Endothelial cell of umbilical vein (primary cell): ENCODE measurements at regions of chr3 and their contacts with region 1.

Region 1: DNA sequence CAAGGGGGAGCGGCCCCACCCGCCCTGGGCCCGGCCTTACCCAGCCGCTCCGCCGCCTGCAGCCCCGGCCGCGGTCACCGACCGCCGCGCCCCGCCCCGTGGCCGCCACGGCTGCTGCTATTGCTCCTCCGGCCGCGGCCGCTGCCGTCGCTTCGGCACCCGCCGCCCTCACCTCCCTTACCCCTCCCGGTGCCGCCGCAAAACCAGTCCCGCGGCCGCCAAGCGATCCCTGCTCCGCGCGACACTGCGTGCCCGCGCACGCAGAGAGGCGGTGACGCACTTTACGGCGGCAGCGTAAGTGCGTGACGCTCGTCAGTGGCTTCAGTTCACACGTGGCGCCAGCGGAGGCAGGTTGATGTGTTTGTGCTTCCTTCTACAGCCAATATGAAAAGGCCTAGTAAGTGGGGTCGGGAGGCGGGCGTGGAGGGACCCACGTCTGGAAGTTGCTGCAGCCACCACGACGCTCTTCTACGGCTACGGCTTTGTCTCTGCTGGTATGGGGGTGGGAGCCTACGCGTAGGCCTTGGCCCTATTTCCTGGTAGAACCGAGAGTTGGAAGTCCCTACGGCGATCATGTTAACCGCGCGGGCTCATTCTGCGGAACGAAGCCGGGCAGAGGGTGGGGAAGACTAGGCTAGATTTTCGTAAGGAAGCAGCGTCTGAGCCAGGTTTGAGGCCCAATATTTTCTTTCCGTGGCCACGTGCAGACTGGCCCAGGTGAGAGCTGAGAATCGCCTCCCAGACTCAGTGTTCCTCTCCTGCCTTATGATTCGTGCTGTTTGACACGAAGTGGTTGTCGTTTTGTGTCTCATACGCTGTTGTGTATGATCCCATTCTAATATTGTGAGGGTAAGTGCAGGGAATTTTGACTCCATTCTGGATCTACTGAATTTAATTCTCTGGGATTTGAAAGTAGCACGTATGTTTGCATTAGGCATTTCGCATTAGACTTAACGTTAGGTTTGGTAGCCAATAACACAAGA is at the starts of genes GNL3 and PBRM1:
- DNase-seq: peak; percentile 96
- H3K4me3 ChIP-seq: peak within 1 kb of the TSS; percentile 97 to 99 (median 99)
- H3K27ac ChIP-seq: peak within 1 kb of the TSS; percentile 94
- H3K4me1 ChIP-seq: peaks cover 18% of the 10 kb centered on the region
- H3K27me3 ChIP-seq: no peaks in the 10 kb centered on the region
- CTCF ChIP-seq: no peak
- POLR2A ChIP-seq: peak; percentile 91
- total RNA-seq, gene GNL3: 109 and 111 TPM in 2 replicates
- total RNA-seq, gene PBRM1: 77.1 and 87.1 TPM in 2 replicates

Region 2: GRCh38 chr3:52428151-52429005 is 257.6 kb before region 1 on chr3:
- CTCF ChIA-PET with region 1: no interaction called
- POLR2A ChIA-PET with region 1: no interaction called
- dilution Hi-C with region 1: no loop called
- intact Hi-C with region 1: loop called (anchors 5 kb)
- DNase-seq: peak; percentile 85
- H3K4me3 ChIP-seq: no peak overlapping the region
- H3K27ac ChIP-seq: peak overlapping the region; percentile 96
- H3K4me1 ChIP-seq: peaks cover 25% of the 10 kb centered on the region
- H3K27me3 ChIP-seq: no peaks in the 10 kb centered on the region
- CTCF ChIP-seq: peak; percentile 70 to 79
- POLR2A ChIP-seq: no peak

Region 3: DNA sequence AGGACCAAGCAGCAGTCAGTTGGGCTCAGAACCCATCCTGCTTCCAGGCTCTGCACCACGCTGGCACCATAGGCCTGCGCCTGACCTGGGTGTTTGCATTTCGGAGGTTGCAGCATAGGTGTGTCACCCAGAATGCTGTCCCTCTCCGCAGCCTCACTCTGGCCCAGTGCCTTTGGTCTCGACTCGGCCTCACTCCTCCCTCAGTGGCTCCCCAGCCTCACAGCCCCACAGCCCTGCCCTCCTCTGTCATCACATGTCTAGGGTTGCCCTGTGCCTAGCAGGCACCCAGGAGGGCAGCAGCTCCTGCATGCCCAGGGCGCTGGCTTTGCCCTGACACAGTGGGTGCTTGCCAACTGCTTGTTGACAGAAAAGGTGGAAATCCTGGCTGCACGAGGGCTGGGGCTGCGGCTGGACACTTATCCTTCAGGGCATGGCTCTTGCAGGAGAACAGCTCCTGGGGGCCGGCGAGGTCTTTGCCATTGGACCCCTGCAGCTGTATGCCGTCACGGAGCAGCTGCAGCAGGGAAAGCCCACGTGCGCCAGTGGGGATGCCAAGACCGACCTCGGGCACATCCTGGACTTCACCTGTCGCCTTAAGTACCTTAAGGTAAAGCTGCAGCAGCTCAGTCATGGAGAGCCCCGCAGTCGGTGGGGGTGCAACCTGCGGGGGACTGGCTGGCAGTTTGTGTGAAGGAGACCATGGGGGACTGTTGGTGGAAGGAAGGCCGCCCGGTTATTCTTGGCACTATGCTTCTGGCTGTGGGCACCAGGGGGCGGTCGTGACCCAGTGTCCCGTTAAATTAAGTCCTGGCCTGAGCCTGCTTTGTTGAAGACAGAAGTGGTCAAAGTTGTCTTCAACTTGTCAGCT is 214.4 kb before region 1 on chr3:
- CTCF ChIA-PET with region 1: no interaction called
- POLR2A ChIA-PET with region 1: no interaction called
- dilution Hi-C with region 1: no loop called
- intact Hi-C with region 1: loop called (anchors 10 kb)
- DNase-seq: peak; percentile 74
- H3K4me3 ChIP-seq: no peak overlapping the region
- H3K27ac ChIP-seq: no peak overlapping the region
- H3K4me1 ChIP-seq: no peaks in the 10 kb centered on the region
- H3K27me3 ChIP-seq: no peaks in the 10 kb centered on the region
- CTCF ChIP-seq: peak; percentile 75 to 86
- POLR2A ChIP-seq: no peak

Region 4: DNA sequence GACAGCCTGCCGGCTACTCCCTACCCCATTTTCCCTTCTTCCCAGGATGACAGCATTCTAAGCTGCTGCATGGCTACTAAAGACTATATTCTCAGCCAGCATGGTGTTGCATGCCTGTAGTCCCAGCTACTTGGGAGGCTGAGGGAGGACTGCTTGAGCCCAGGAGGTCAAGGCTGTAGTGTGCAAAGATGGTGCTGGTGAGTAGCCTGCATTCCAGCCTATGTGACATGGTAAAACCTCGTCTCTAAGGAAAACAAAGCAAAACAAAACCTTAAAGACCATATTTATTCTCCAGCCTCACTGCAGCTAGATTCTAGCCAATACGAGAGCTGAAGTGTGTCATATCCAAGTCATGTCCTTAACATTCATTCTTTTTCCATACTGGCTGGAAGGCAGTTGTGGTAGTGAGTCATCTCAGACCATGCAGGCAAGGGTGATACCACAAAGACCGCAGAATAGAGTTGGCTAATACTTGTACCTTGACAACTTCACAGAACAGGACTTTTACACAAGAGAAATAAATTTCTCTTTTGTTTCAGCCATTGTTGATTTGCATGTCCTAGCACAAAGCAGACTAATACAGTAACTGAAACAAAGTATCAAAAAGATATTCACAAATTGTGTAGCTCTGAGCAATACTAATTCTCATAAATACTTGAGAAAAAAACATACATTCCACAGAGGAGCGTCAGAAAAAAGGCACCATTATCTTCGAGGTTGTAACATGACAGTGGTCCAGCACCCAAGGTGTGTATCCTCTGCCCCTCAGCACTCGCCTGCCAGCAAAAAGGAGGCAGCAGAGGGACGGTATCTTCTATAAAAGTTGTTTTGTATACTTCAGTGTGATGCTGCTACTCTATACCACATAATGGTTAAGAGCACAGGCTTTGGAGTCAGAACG is 15.1 kb before region 1 on chr3:
- CTCF ChIA-PET with region 1: interaction called, 3 read pairs
- POLR2A ChIA-PET with region 1: no interaction called
- dilution Hi-C with region 1: no loop called
- intact Hi-C with region 1: loop called (anchors 2 kb)
- DNase-seq: peak; percentile 95
- H3K4me3 ChIP-seq: no peak overlapping the region
- H3K27ac ChIP-seq: peak overlapping the region; percentile 88
- H3K4me1 ChIP-seq: peaks cover 21% of the 10 kb centered on the region
- H3K27me3 ChIP-seq: no peaks in the 10 kb centered on the region
- CTCF ChIP-seq: no peak
- POLR2A ChIP-seq: no peak

Region 5: GRCh38 chr3:52705688-52706686 is 20.0 kb after region 1 on chr3 and contains the starts of genes GLT8D1 and SPCS1:
- CTCF ChIA-PET with region 1: no interaction called
- POLR2A ChIA-PET with region 1: no interaction called
- dilution Hi-C with region 1: no loop called
- intact Hi-C with region 1: loop called (anchors 2 kb)
- DNase-seq: peak; percentile 90
- H3K4me3 ChIP-seq: peak within 1 kb of the TSS; percentile 62 to 94 (median 92)
- H3K27ac ChIP-seq: peak within 1 kb of the TSS; percentile 57
- H3K4me1 ChIP-seq: peaks cover 17% of the 10 kb centered on the region
- H3K27me3 ChIP-seq: no peaks in the 10 kb centered on the region
- CTCF ChIP-seq: no peak
- POLR2A ChIP-seq: peak; percentile 83
- total RNA-seq, gene GLT8D1: 69.9 and 73.5 TPM in 2 replicates
- total RNA-seq, gene SPCS1: 100 and 107 TPM in 2 replicates